ENCODE measurements at regions of chr18 and their contacts with region 1.

Region 1: GRCh38 chr18:77359561-77360314 is 110.1 kb downstream of the GALR1 start:
- DNase-seq: no peak
- H3K4me3 Mint-ChIP-seq: no peak overlapping the region
- H3K27ac Mint-ChIP-seq: no peak overlapping the region
- H3K4me1 Mint-ChIP-seq: no peaks in the 10 kb centered on the region
- H3K27me3 Mint-ChIP-seq: no peaks in the 10 kb centered on the region

Region 2: GRCh38 chr18:77249569-77250500 is 109.9 kb before region 1 on chr18 and contains the start of gene GALR1:
- intact Hi-C with region 1: loop called (anchors 5 kb)
- DNase-seq: no peak
- H3K4me3 Mint-ChIP-seq: peak within 1 kb of the TSS; percentile 17
- H3K27ac Mint-ChIP-seq: peak within 1 kb of the TSS; percentile 14
- H3K4me1 Mint-ChIP-seq: peaks cover 12% of the 10 kb centered on the region
- H3K27me3 Mint-ChIP-seq: peaks cover 57% of the 10 kb centered on the region
- total RNA-seq, gene GALR1: not detected in 2 replicates

Region 3: GRCh38 chr18:77341527-77342325 is 18.0 kb before region 1 on chr18:
- intact Hi-C with region 1: no loop called
- DNase-seq: no peak
- H3K4me3 Mint-ChIP-seq: no peak overlapping the region
- H3K27ac Mint-ChIP-seq: no peak overlapping the region
- H3K4me1 Mint-ChIP-seq: no peaks in the 10 kb centered on the region
- H3K27me3 Mint-ChIP-seq: no peaks in the 10 kb centered on the region